ENCODE measurements at regions of chr14 and their contacts with region 1.

Region 1: GRCh38 chr14:20530771-20531571 is 25.6 kb downstream of the RNASE10 start:
- DNase-seq: peak; percentile 78
- ATAC-seq: peak; percentile 97
- H3K4me3 ChIP-seq: no peak overlapping the region
- H3K27ac ChIP-seq: no peak overlapping the region
- H3K4me1 ChIP-seq: peaks cover 0 to 10% of the 10 kb centered on the region in 2 experiments; a peak in 2 of 4 replicates
- H3K27me3 ChIP-seq: no peaks in the 10 kb centered on the region
- CTCF ChIP-seq: peak; percentile 44 to 85 (median 80); a peak in 5 of 6 replicates
- POLR2A ChIP-seq: no peak
- RAD21 ChIP-seq: peak; percentile 42; the same call in 1 of the 2 replicates

Region 2: GRCh38 chr14:20587489-20588154 is 56.7 kb after region 1 on chr14 and contains the start of gene RNASE11:
- CTCF ChIA-PET with region 1: no interaction called
- POLR2A ChIA-PET with region 1: no interaction called
- RAD21 ChIA-PET with region 1: no interaction called
- intact Hi-C with region 1: loop called (anchors 10 kb)
- DNase-seq: no peak
- ATAC-seq: no peak
- H3K4me3 ChIP-seq: no peak within 1 kb of the TSS
- H3K27ac ChIP-seq: no peak within 1 kb of the TSS
- H3K4me1 ChIP-seq: no peaks in the 10 kb centered on the region
- H3K27me3 ChIP-seq: peaks cover 31% of the 10 kb centered on the region; the same call in 1 of the 2 replicates
- CTCF ChIP-seq: no peak
- POLR2A ChIP-seq: no peak
- RAD21 ChIP-seq: no peak
- total RNA-seq, gene RNASE11: not detected

Region 3: DNA sequence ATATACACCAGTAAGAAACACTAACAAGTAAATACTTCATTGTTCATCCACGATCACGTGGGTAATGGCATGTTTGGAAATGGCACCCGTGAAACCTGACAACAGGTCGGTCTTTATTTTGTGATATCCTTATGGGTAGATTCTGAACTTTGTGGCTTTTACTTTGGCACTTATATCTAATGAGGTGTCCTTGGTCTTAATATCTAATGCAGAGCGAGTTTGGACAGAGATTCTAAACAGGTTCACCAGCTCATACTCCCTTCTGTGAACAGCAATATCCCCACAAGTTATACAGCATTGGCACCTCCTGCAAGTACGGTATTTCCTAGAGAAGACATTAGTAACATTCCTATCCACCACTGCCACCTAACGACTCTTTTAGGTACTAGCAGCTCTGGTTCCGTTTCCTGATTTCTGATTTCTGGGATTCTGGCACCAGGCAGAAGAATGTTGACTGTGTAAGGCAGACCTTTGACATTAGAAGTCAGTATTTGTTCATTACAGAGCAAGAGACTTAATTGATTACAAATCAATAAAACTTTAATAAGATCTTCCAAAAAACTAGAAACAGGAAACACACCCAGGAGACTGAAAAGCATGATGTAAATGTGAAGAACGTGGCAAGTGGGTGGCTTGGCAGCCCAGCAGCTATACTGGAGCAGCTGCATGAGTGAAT is 160.0 kb after region 1 on chr14:
- CTCF ChIA-PET with region 1: interaction called, 3 read pairs
- POLR2A ChIA-PET with region 1: no interaction called
- RAD21 ChIA-PET with region 1: no interaction called
- intact Hi-C with region 1: loop called (anchors 2 kb)
- DNase-seq: peak; percentile 60
- ATAC-seq: peak; percentile 93
- H3K4me3 ChIP-seq: no peak overlapping the region
- H3K27ac ChIP-seq: no peak overlapping the region
- H3K4me1 ChIP-seq: peaks cover 0 to 8% of the 10 kb centered on the region in 2 experiments; a peak in 2 of 4 replicates
- H3K27me3 ChIP-seq: no peaks in the 10 kb centered on the region
- CTCF ChIP-seq: peak; percentile 84 to 89 (median 86)
- POLR2A ChIP-seq: no peak
- RAD21 ChIP-seq: peak; percentile 84